K562 (cell line): ENCODE measurements at regions of chr1 and their contacts with region 1.

Region 1: GRCh38 chr1:28505406-28506187 is at the start of gene RCC1:
- DNase-seq: peak; percentile 95 to 99 (median 96)
- ATAC-seq: peak; percentile 81
- H3K4me3 ChIP-seq: peak within 1 kb of the TSS; percentile 87
- H3K27ac ChIP-seq: peak within 1 kb of the TSS; percentile 94
- H3K4me1 ChIP-seq: peaks cover 11 to 29% of the 10 kb centered on the region in 2 experiments; a peak in 4 of 5 replicates
- H3K27me3 ChIP-seq: no peaks in the 10 kb centered on the region
- CTCF ChIP-seq: no peak
- EP300 ChIP-seq: no peak; the same call in 1 of the 2 replicates
- POLR2A ChIP-seq: peak; percentile 100
- RAD21 ChIP-seq: 0 out of 4 replicates have a peak, but pooled peaks of 1 of the 2 experiments have one; percentile 10
- polyA plus RNA-seq, gene RCC1: 16.4 to 28.1 TPM

Region 2: DNA sequence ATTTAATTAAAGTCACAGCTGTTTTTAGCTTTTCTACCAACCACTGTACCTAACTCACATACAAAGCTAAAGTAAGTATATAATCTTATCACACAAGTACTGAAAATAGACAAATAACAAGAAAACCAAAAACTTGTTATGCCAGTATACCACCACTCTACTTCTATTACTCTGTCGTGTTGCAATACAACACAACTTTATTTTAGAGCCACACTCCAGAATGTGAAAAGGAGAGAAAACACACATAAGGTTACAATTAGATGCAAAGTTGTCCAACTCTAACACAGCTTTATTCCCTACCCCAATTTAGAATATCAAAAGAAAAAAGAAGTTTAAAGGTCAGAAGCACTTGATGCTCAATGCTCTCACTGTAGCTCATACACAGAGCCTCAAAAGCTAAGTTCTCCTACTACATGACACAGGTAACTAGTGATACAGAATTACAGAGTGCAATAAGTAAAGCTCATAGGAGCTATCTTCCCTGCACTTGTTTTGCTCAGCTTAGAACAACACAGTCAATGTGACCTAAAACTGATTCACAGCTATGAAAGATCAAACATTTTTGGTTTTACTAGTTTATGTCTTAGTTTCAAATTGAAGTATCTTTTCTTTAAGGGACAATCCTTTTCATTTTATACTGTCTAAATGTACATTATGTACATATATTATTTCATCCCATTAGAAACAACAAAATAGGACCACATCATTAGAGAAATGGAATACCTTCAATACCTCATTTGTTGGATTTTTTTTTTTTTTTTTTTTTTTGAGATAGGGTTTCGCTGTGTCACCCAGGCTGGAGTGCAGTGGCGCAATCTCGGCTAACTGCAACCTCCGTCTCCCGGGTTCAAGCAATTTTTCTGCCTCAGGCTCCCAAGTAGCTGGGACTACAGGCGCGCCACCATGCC is 446.4 kb before region 1 on chr1:
- CTCF ChIA-PET with region 1: no interaction called
- POLR2A ChIA-PET with region 1: no interaction called
- in situ Hi-C with region 1: no loop called
- intact Hi-C with region 1: no loop called
- DNase-seq: no peak
- ATAC-seq: peak; percentile 81
- H3K4me3 ChIP-seq: no peak overlapping the region
- H3K27ac ChIP-seq: peak overlapping the region; percentile 28
- H3K4me1 ChIP-seq: peaks cover 8 to 39% of the 10 kb centered on the region in 2 experiments; a peak in 4 of 5 replicates
- H3K27me3 ChIP-seq: no peaks in the 10 kb centered on the region
- CTCF ChIP-seq: no peak
- EP300 ChIP-seq: no peak
- POLR2A ChIP-seq: no peak
- RAD21 ChIP-seq: no peak

Region 3: GRCh38 chr1:28139025-28139712 is 366.4 kb before region 1 on chr1:
- CTCF ChIA-PET with region 1: no interaction called
- POLR2A ChIA-PET with region 1: no interaction called
- in situ Hi-C with region 1: no loop called
- intact Hi-C with region 1: no loop called
- DNase-seq: peak in 1 of 4 experiments; percentile 8
- ATAC-seq: no peak
- H3K4me3 ChIP-seq: no peak overlapping the region
- H3K27ac ChIP-seq: no peak overlapping the region
- H3K4me1 ChIP-seq: peaks cover 0 to 5% of the 10 kb centered on the region in 2 experiments; a peak in 2 of 5 replicates
- H3K27me3 ChIP-seq: no peaks in the 10 kb centered on the region
- CTCF ChIP-seq: no peak
- EP300 ChIP-seq: no peak
- POLR2A ChIP-seq: no peak
- RAD21 ChIP-seq: no peak

Region 4: GRCh38 chr1:28359592-28360239 is 145.9 kb before region 1 on chr1:
- CTCF ChIA-PET with region 1: no interaction called
- POLR2A ChIA-PET with region 1: interaction called, 12 read pairs
- in situ Hi-C with region 1: no loop called
- intact Hi-C with region 1: no loop called
- DNase-seq: peak; percentile 63 to 84 (median 68)
- ATAC-seq: peak; percentile 88
- H3K4me3 ChIP-seq: no peak overlapping the region
- H3K27ac ChIP-seq: no peak overlapping the region
- H3K4me1 ChIP-seq: peaks cover 6 to 7% of the 10 kb centered on the region in 2 experiments; a peak in 3 of 5 replicates
- H3K27me3 ChIP-seq: no peaks in the 10 kb centered on the region
- CTCF ChIP-seq: peak; percentile 65 to 86 (median 77)
- EP300 ChIP-seq: peak; percentile 33
- POLR2A ChIP-seq: no peak
- RAD21 ChIP-seq: peak; percentile 72 to 83

Region 5: DNA sequence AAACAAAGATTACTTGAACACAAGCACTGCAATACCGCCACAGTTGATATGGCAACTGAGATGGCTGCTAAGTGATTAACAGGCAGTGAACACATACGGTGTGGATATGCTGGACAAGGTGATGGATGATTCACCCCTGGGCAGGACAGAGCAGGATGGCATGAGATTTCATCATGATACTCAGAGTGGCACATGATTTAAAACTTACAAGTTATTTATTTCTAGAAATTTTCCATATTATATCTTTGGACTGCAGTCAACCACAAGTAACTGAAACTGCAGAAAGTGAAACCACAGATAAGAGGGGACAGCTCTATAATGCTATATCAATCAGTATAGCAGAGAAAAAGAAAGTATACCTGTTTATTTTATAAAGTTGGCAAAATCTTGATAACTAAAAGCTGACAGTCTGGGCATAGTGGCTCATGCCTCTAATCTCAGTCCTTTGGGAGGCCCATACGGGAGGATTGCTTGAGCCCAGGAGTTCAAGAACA is 88.1 kb before region 1 on chr1:
- CTCF ChIA-PET with region 1: no interaction called
- POLR2A ChIA-PET with region 1: interaction called, 20 read pairs
- in situ Hi-C with region 1: no loop called
- intact Hi-C with region 1: no loop called
- DNase-seq: peak in 2 of 4 experiments; percentile 39 to 69
- ATAC-seq: peak; percentile 74
- H3K4me3 ChIP-seq: 0 out of 2 replicates have a peak overlapping the region, but pooled peaks have one; percentile 6
- H3K27ac ChIP-seq: peak overlapping the region; percentile 18
- H3K4me1 ChIP-seq: peaks cover 22 to 47% of the 10 kb centered on the region in 2 experiments
- H3K27me3 ChIP-seq: no peaks in the 10 kb centered on the region
- CTCF ChIP-seq: no peak
- EP300 ChIP-seq: peak; percentile 90
- POLR2A ChIP-seq: no peak
- RAD21 ChIP-seq: no peak

Region 6: DNA sequence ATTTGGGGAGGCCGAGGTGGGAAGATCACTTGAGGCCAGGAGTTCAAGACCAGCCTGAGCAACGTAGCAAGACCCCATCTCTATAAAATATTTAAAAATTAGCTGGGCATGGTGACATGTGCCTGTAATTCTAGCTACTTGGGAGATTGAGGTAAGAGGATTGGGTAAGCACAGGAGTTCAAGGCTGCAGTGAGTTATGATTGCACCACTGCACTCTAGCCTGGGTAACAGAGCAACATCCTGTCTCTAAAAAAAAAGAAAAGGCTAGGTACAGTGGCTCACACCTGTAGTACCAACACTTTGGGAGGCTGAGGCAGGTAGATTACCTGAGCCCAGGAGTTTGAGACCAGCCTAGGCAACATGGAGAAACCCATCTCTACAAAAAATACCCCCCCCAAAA is 35.5 kb before region 1 on chr1:
- CTCF ChIA-PET with region 1: no interaction called
- POLR2A ChIA-PET with region 1: interaction called, 10 read pairs
- in situ Hi-C with region 1: no loop called
- intact Hi-C with region 1: no loop called
- DNase-seq: no peak
- ATAC-seq: no peak
- H3K4me3 ChIP-seq: no peak overlapping the region
- H3K27ac ChIP-seq: no peak overlapping the region
- H3K4me1 ChIP-seq: peaks cover 7 to 8% of the 10 kb centered on the region in 2 experiments; a peak in 3 of 5 replicates
- H3K27me3 ChIP-seq: no peaks in the 10 kb centered on the region
- CTCF ChIP-seq: no peak
- EP300 ChIP-seq: no peak
- POLR2A ChIP-seq: no peak
- RAD21 ChIP-seq: no peak

Region 7: DNA sequence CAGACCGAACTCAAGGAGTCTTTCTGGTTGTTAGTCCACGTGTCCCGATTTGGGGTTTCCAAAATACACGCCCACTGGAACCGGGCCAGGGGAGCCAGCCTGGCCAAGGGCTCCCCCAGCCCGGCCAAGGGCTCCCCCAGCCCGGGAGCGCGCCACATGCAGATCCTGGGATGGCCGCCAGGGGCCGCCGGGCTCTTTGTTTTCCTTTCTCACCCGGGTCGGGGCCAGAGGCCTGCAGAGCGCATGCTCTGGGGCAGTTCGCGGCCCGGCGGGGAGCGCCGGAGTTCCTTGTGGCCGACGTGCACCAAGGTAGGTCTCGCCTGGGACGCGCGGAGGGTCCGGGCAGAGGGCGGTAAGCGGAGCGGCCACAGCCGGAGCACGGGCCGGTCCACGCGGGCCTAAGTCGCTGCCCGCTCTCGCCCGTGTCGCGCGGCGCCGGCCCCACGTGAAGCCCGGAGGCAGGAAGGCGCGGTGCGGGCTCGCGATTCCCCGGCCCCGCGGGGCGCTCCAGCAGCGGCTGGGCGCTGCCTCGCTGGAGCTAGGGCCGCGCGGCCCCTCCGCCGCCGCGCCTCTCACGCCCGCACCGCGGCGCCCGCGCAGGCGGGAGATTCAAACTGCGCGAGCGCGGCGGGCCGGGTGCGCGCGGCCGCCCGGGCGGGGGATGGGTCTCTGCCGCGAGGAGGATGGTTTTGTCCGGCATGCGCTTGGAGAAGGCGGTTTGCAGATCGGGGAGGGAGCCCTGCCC is 12.6 kb after region 1 on chr1:
- CTCF ChIA-PET with region 1: no interaction called
- POLR2A ChIA-PET with region 1: interaction called, 123 read pairs
- in situ Hi-C with region 1: no loop called
- intact Hi-C with region 1: no loop called
- DNase-seq: peak; percentile 93 to 96 (median 94)
- ATAC-seq: peak; percentile 76
- H3K4me3 ChIP-seq: peak overlapping the region; percentile 74
- H3K27ac ChIP-seq: peak overlapping the region; percentile 99
- H3K4me1 ChIP-seq: peaks cover 46 to 47% of the 10 kb centered on the region in 2 experiments
- H3K27me3 ChIP-seq: no peaks in the 10 kb centered on the region
- CTCF ChIP-seq: peak; percentile 96 to 99 (median 96)
- EP300 ChIP-seq: no peak
- POLR2A ChIP-seq: peak; percentile 87
- RAD21 ChIP-seq: peak; percentile 91 to 94

Region 8: GRCh38 chr1:28602536-28603439 is 97.2 kb after region 1 on chr1:
- CTCF ChIA-PET with region 1: interaction called, 3 read pairs
- POLR2A ChIA-PET with region 1: interaction called, 81 read pairs
- in situ Hi-C with region 1: no loop called
- intact Hi-C with region 1: no loop called
- DNase-seq: peak; percentile 67 to 86 (median 73)
- ATAC-seq: peak; percentile 91
- H3K4me3 ChIP-seq: no peak overlapping the region
- H3K27ac ChIP-seq: no peak overlapping the region
- H3K4me1 ChIP-seq: no peaks in the 10 kb centered on the region
- H3K27me3 ChIP-seq: no peaks in the 10 kb centered on the region
- CTCF ChIP-seq: peak; percentile 82 to 94 (median 86)
- EP300 ChIP-seq: no peak
- POLR2A ChIP-seq: no peak
- RAD21 ChIP-seq: peak; percentile 92 to 97

Region 9: DNA sequence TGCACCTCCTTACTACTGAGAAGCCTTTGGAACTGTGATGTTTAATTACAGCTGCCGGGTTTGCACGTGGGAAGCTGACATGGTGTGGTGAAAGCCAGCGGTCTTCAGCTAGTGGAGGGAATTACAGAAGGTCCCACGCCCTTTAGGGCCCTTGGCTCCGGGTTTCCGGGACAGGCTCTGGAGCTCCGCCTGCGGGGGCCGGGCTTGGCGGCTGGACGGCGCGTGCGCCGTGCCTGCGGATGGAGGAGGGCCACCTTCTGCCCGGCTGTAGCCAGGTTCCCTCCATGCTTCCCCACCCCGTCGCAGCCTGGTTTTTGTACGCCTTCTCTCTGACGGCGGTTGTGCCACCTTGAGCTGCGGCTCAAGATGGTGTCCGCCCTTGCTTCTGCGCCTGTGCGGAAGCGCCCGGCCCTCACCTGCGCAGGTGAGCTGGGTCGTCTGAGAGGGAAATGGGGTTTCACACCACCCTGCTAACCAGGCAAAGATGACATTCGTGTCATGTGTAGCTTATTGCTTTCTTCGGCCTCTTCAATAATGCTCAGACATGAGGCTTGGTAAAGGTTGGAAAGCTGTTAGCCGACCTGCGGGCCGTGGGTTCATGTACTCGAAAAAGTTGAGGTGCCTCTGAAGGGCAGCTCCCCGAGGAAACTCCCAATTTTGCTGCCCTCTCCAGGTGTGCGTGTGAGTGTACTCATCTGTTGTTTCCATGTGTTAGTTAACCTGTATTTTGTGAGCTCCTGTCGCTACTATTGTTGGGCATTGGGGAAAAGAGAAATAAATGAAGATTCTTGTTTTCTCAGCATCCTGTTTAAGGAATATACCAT is 269.7 kb after region 1 on chr1:
- CTCF ChIA-PET with region 1: no interaction called
- POLR2A ChIA-PET with region 1: no interaction called
- in situ Hi-C with region 1: no loop called
- intact Hi-C with region 1: no loop called
- DNase-seq: peak in 2 of 4 experiments; percentile 24 to 42
- ATAC-seq: peak; percentile 34; the same call in 1 of the 3 replicates
- H3K4me3 ChIP-seq: no peak overlapping the region
- H3K27ac ChIP-seq: no peak overlapping the region
- H3K4me1 ChIP-seq: peaks cover 0 to 5% of the 10 kb centered on the region in 2 experiments; a peak in 2 of 5 replicates
- H3K27me3 ChIP-seq: no peaks in the 10 kb centered on the region
- CTCF ChIP-seq: no peak
- EP300 ChIP-seq: no peak
- POLR2A ChIP-seq: no peak
- RAD21 ChIP-seq: no peak